ENCODE measurements at regions of chr15 and their contacts with region 1.

Region 1: DNA sequence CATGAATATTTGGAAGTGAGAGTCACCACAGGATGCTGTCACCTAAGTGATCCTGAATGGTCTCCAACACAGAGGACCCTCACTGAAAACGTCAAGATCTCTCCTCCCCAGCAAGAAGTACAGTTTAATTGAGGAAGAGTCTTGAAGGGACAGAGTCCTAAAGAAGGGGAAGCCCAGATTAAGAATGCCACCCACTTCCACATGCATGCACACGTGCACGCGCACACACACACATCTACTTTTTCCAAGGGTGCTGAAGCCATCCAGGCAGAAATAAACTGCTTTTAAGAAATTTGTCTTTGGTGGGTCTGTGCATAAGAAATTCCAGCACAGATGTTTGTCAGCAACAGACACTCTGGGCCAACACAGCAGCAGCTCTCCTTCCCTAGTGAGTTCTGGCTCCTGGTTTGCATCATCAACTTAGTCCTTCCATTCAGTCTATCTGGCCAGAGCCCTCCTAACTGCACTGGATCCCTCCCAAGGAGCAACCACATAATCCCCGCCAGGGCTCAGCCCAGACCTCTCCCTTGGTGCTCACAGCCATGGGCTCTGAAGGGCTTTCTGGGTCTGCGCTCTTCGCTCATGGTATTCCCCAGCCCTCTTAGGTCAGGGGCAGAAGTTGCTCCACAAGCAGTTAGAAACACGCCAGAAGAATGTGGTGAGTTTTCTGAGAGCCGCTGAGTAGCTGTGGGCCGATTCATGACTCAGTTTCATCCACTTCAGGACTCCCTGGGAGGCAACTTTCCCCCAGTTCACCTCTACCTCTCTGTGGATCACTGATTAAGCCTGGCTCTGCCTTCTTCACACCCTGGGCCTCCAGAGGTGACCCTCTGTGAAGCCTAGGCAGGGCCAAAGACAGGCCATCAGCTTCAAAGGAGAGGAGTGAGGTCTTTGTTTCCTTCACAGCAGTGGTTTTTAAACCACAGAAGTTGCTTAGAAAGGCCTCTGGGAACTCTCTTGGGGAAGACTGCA is 132.6 kb upstream of the LIPC start:
- DNase-seq: peak in 1 of 42 donors; percentile 12

Region 2: GRCh38 chr15:58221591-58222241 is 77.4 kb before region 1 on chr15:
- intact Hi-C with region 1: no loop called
- DNase-seq: peak in 19 of 42 donors; percentile 17 to 72 (median 32)

Region 3: GRCh38 chr15:58357521-58358476 is 58.6 kb after region 1 on chr15:
- intact Hi-C with region 1: loop called (anchors 10 kb)
- DNase-seq: no peak

Region 4: DNA sequence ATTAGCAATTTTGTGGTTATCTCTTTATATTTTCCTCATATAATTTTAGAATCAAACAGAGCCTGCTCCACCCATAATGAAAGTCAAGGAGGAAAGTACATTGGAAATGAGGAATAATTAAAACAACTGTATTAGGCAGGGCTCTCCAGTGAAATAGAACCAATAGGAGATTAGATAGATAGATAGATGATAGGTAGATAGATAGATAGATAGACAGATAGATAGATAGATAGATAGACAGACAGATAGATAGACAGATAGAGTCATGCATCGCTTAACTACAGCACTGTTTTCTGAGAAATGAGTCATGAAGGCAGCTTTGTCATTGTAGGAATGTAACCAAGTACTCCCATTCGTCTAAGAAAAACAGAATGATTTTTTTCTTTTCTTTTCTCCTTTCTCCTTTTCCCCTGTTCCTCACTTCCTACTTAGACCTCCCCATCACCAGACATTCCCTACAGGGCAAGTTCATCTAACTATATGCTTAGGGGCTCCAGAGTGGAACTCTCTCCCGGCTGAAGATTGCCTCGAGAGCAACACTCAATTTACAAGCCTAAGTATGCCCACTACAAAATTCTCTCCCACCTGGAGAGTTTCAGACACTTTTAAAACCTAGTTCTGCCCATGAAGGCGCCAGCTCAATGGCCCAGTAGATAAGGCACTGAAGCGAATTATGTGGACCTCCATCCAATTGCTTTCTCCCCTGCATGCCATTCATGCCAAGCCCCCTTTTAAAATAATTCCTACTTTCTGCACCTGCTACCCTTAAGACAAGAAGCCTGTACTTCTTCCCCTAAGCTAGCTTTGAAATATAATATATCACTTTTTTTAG is 79.3 kb after region 1 on chr15:
- intact Hi-C with region 1: no loop called
- DNase-seq: no peak